ENCODE measurements at regions of chr13 and their contacts with region 1.

Region 1: GRCh38 chr13:35157143-35157755 is 215.2 kb downstream of the NBEA start:
- DNase-seq: peak in 2 of 5 donors; percentile 18 to 24
- ATAC-seq: peak; percentile 37 to 65 (median 44)
- H3K4me3 ChIP-seq: no peak overlapping the region
- H3K27ac ChIP-seq: no peak overlapping the region
- H3K4me1 ChIP-seq: peaks cover 0 to 8% (median 0%) of the 10 kb centered on the region in 12 donors
- H3K27me3 ChIP-seq: no peaks in the 10 kb centered on the region
- CTCF ChIP-seq: peak; percentile 58 to 85 (median 74)
- POLR2A ChIP-seq: no peak

Region 2: GRCh38 chr13:33799950-33800592 is 1357.2 kb before region 1 on chr13:
- intact Hi-C with region 1: loop called in 5 of 10 experiments (anchors 5 to 10 kb)
- DNase-seq: no peak
- ATAC-seq: peak in 3 of 4 donors; percentile 28 to 58 (median 53)
- H3K4me3 ChIP-seq: peak overlapping the region in 5 of 12 donors; percentile 4 to 29 (median 15)
- H3K27ac ChIP-seq: peak overlapping the region in 8 of 12 donors; percentile 4 to 45 (median 18)
- H3K4me1 ChIP-seq: peaks cover 0 to 29% (median 13%) of the 10 kb centered on the region in 12 donors
- H3K27me3 ChIP-seq: no peaks in the 10 kb centered on the region
- CTCF ChIP-seq: peak in 11 of 12 donors; percentile 21 to 65 (median 54)
- POLR2A ChIP-seq: no peak

Region 3: GRCh38 chr13:33865945-33866344 is 1291.3 kb before region 1 on chr13:
- intact Hi-C with region 1: no loop called
- DNase-seq: no peak
- ATAC-seq: no peak
- H3K4me3 ChIP-seq: no peak overlapping the region
- H3K27ac ChIP-seq: no peak overlapping the region
- H3K4me1 ChIP-seq: no peaks in the 10 kb centered on the region
- H3K27me3 ChIP-seq: no peaks in the 10 kb centered on the region
- CTCF ChIP-seq: no peak
- POLR2A ChIP-seq: no peak

Region 4: GRCh38 chr13:33931397-33932311 is 1225.6 kb before region 1 on chr13:
- intact Hi-C with region 1: loop called (anchors 1 to 10 kb)
- DNase-seq: peak in 1 of 5 donors; percentile 20
- ATAC-seq: peak in 3 of 4 donors; percentile 79 to 87 (median 84)
- H3K4me3 ChIP-seq: no peak overlapping the region
- H3K27ac ChIP-seq: no peak overlapping the region
- H3K4me1 ChIP-seq: peaks cover 0 to 12% (median 0%) of the 10 kb centered on the region in 12 donors
- H3K27me3 ChIP-seq: no peaks in the 10 kb centered on the region
- CTCF ChIP-seq: peak; percentile 26 to 71 (median 57)
- POLR2A ChIP-seq: no peak

Region 5: GRCh38 chr13:34076943-34077703 is 1080.1 kb before region 1 on chr13:
- intact Hi-C with region 1: loop called in 7 of 10 experiments (anchors 5 to 10 kb)
- DNase-seq: no peak
- ATAC-seq: peak in 1 of 4 donors; percentile 46
- H3K4me3 ChIP-seq: peak overlapping the region in 1 of 12 donors; percentile 24
- H3K27ac ChIP-seq: no peak overlapping the region
- H3K4me1 ChIP-seq: peaks cover 0 to 12% (median 3%) of the 10 kb centered on the region in 12 donors
- H3K27me3 ChIP-seq: no peaks in the 10 kb centered on the region
- CTCF ChIP-seq: peak; percentile 34 to 79 (median 66)
- POLR2A ChIP-seq: no peak

Region 6: DNA sequence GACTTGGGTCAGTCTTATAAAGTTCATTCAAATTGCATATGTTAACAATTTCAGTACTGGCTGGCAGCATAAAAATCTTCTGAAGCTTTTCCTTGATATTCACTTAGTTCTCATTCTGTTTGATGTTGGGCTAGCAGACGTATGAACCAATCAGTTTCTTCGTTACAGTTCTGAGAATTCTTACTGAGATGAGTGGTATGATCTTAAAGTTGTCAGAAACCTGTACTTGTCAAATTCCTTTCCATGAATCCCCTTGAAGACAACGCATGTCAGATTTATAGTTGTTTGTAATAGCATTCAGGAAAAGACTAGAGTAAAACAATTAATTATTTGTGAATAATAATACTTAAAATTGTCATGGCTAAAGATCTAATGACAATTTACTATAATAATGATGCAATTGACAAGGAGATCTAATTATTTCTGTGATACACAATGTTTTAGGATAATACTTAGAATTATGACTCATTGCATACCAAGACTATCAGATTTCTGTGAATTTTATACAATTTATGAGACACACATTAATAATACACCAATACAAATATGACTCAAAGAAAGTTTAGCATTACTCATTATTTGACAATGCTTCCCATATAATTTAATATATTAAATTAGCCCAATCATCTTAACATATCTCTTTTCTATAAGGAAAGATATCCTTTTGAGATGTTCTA is 892.1 kb before region 1 on chr13:
- intact Hi-C with region 1: loop called in 1 of 10 experiments (anchors 5 kb)
- DNase-seq: no peak
- ATAC-seq: no peak
- H3K4me3 ChIP-seq: no peak overlapping the region
- H3K27ac ChIP-seq: no peak overlapping the region
- H3K4me1 ChIP-seq: no peaks in the 10 kb centered on the region
- H3K27me3 ChIP-seq: no peaks in the 10 kb centered on the region
- CTCF ChIP-seq: no peak
- POLR2A ChIP-seq: no peak

Region 7: DNA sequence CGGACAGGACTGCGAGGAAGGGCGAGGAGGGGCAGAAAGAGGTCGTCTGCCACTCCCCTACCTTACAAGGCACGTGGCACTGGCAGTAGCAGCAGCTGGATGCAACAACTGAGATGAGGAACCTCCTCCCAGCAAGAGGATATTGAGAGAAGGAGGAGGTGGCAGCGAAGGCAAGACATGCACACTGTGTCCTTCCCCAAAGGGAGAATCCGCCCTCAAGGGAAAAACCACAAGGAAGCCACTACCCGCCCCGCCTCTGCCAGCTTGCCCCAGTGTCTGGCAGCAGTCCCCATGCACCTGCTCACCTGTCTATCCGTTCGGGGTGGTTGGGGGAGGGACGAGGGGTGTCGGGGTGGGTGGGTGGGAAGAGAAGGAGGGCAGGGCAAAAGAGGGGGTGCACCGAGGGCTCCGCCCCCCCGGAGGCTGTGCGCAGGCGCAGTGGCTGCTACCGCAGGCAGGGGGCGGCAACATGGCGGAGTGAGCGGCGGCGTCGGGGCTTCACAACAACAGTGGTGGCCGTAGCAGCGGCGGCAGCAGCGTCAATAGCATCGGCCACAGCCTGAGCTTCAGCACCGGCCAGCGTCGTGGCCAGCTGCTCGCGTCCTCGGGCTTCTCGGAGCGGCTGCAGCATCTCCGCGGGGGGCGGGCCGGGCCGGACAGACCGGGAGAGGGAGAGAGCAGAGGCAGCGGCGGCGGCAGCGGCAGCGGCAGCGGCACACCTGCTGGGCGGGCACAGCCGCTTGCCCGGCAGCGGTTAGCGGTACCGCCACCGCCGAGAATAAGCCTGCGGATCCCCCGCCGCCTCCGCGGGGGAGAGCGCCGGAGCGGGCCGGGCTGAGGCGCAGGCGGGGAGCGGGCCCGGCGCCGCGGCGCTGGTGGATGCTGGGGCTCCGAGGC is 215.2 kb before region 1 on chr13 and contains the start of gene NBEA:
- intact Hi-C with region 1: loop called in 2 of 10 experiments (anchors 10 kb)
- DNase-seq: peak; percentile 80 to 91 (median 86)
- ATAC-seq: peak; percentile 46 to 91 (median 88)
- H3K4me3 ChIP-seq: peak within 1 kb of the TSS; percentile 71 to 90 (median 84)
- H3K27ac ChIP-seq: peak within 1 kb of the TSS in 11 of 12 donors; percentile 65 to 88 (median 75)
- H3K4me1 ChIP-seq: peaks cover 0 to 34% (median 19%) of the 10 kb centered on the region in 12 donors
- H3K27me3 ChIP-seq: no peaks in the 10 kb centered on the region
- CTCF ChIP-seq: peak; percentile 25 to 68 (median 47)
- POLR2A ChIP-seq: peak in 1 of 2 donors; percentile 22
- total RNA-seq, gene NBEA: 18.8 to 39.2 (median 25.0) TPM

Region 8: GRCh38 chr13:34951528-34951927 is 205.7 kb before region 1 on chr13:
- intact Hi-C with region 1: loop called in 3 of 10 experiments (anchors 10 kb)
- DNase-seq: no peak
- ATAC-seq: no peak
- H3K4me3 ChIP-seq: no peak overlapping the region
- H3K27ac ChIP-seq: no peak overlapping the region
- H3K4me1 ChIP-seq: peaks cover 0 to 21% (median 0%) of the 10 kb centered on the region in 12 donors
- H3K27me3 ChIP-seq: no peaks in the 10 kb centered on the region
- CTCF ChIP-seq: no peak
- POLR2A ChIP-seq: no peak

Region 9: DNA sequence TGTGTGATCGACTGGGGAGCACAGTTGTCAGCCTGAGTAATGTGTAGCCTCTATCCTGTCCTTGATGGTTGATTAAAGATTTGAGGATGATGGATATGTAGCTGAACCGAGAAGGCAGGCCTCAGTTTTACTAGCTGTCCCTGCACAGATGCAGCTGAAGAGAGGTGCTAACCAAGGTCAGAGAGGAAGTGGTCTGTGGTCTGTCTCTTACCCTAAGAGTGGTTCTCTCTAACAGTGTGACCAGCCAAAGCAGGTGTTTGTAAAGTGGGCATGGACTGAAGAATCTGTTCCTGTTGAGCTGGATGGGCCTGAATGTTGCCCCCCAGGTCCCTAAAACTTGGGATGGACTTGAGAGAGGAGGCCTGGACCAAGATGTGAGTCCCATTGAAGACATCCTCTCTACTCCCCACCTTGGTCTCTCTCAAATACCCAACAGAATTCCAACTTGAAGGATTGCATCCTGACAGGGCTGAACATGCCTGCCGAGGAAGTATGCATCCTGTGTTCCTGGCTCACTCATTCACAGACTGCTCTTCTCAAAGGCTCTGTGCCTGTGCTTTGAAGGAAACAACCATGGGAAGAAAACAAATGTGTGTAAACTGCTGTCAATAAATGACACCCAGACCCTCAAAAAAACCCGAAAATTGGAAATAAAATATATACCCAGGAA is 95.4 kb after region 1 on chr13:
- intact Hi-C with region 1: no loop called
- DNase-seq: no peak
- ATAC-seq: no peak
- H3K4me3 ChIP-seq: no peak overlapping the region
- H3K27ac ChIP-seq: no peak overlapping the region
- H3K4me1 ChIP-seq: no peaks in the 10 kb centered on the region
- H3K27me3 ChIP-seq: no peaks in the 10 kb centered on the region
- CTCF ChIP-seq: no peak
- POLR2A ChIP-seq: no peak